Caco-2 (cell line): ENCODE measurements at regions of chr4 and their contacts with region 1.

Region 1: GRCh38 chr4:54322818-54323417 is 93.8 kb downstream of the PDGFRA start:
- DNase-seq: peak; percentile 75 to 79
- H3K4me3 ChIP-seq: no peak overlapping the region
- H3K4me3 Mint-ChIP-seq: no peak overlapping the region
- H3K27ac Mint-ChIP-seq: no peak overlapping the region
- H3K4me1 ChIP-seq: no peaks in the 10 kb centered on the region
- H3K4me1 Mint-ChIP-seq: no peaks in the 10 kb centered on the region
- H3K27me3 ChIP-seq: no peaks in the 10 kb centered on the region
- H3K27me3 Mint-ChIP-seq: no peaks in the 10 kb centered on the region
- CTCF ChIP-seq: peak; percentile 66 to 69

Region 2: GRCh38 chr4:53497487-53498244 is 825.3 kb before region 1 on chr4:
- CTCF ChIA-PET with region 1: no interaction called
- POLR2A ChIA-PET with region 1: no interaction called
- intact Hi-C with region 1: no loop called
- DNase-seq: peak in 1 of 2 experiments; percentile 42
- H3K4me3 ChIP-seq: no peak overlapping the region
- H3K4me3 Mint-ChIP-seq: no peak overlapping the region
- H3K27ac Mint-ChIP-seq: no peak overlapping the region
- H3K4me1 ChIP-seq: peaks cover 8% of the 10 kb centered on the region
- H3K4me1 Mint-ChIP-seq: no peaks in the 10 kb centered on the region
- H3K27me3 ChIP-seq: no peaks in the 10 kb centered on the region
- H3K27me3 Mint-ChIP-seq: no peaks in the 10 kb centered on the region
- CTCF ChIP-seq: no peak

Region 3: GRCh38 chr4:54375807-54376206 is 52.9 kb after region 1 on chr4:
- CTCF ChIA-PET with region 1: interaction called, 3 read pairs
- POLR2A ChIA-PET with region 1: no interaction called
- intact Hi-C with region 1: loop called (anchors 1 kb)
- DNase-seq: no peak
- H3K4me3 ChIP-seq: no peak overlapping the region
- H3K4me3 Mint-ChIP-seq: no peak overlapping the region
- H3K27ac Mint-ChIP-seq: no peak overlapping the region
- H3K4me1 ChIP-seq: no peaks in the 10 kb centered on the region
- H3K4me1 Mint-ChIP-seq: no peaks in the 10 kb centered on the region
- H3K27me3 ChIP-seq: no peaks in the 10 kb centered on the region
- H3K27me3 Mint-ChIP-seq: peaks cover 2% of the 10 kb centered on the region
- CTCF ChIP-seq: no peak

Region 4: GRCh38 chr4:54433686-54434085 is 110.8 kb after region 1 on chr4:
- CTCF ChIA-PET with region 1: interaction called, 3 read pairs
- POLR2A ChIA-PET with region 1: no interaction called
- intact Hi-C with region 1: loop called (anchors 2 kb)
- DNase-seq: peak in 1 of 2 experiments; percentile 1
- H3K4me3 ChIP-seq: no peak overlapping the region
- H3K4me3 Mint-ChIP-seq: no peak overlapping the region
- H3K27ac Mint-ChIP-seq: no peak overlapping the region
- H3K4me1 ChIP-seq: no peaks in the 10 kb centered on the region
- H3K4me1 Mint-ChIP-seq: no peaks in the 10 kb centered on the region
- H3K27me3 ChIP-seq: no peaks in the 10 kb centered on the region
- H3K27me3 Mint-ChIP-seq: peaks cover 19% of the 10 kb centered on the region
- CTCF ChIP-seq: peak; percentile 19 to 32

Region 5: DNA sequence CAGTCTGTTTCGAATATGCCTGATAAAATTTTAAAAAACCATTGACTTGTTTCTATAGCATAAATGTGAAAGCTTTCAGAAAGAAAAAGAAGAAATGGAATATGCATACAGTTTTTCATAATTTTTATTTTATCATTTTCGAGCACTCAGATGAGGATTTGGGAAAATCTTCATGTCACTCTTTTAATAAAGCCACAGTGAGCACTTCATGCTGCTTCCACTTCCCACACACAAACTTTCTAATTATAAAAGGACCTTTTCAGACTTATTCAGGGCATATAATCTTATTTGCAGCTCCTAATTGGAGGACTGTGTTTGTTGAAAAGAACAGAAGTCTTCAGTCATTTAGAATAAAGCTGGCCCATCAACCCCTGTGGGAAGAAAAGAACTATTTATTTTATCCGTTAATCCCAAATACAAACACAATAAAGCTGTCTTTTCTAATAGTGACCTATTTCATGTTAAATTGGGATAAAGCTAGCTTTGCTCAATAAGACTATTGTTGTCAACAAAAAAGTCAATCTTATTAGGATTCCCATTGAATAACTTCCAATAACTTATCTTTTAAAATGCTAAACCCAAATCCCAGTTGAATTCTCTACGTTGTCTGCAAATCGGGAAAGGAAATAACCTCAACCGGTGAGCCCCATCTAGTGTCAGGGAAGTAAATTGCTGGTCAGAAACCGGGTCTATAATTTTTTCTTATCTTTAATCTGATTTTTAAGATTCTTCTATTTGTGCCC is 117.6 kb after region 1 on chr4:
- CTCF ChIA-PET with region 1: interaction called, 5 read pairs
- POLR2A ChIA-PET with region 1: no interaction called
- intact Hi-C with region 1: loop called (anchors 1 kb)
- DNase-seq: peak in 1 of 2 experiments; percentile 39
- H3K4me3 ChIP-seq: no peak overlapping the region
- H3K4me3 Mint-ChIP-seq: no peak overlapping the region
- H3K27ac Mint-ChIP-seq: no peak overlapping the region
- H3K4me1 ChIP-seq: no peaks in the 10 kb centered on the region
- H3K4me1 Mint-ChIP-seq: no peaks in the 10 kb centered on the region
- H3K27me3 ChIP-seq: no peaks in the 10 kb centered on the region
- H3K27me3 Mint-ChIP-seq: peaks cover 22% of the 10 kb centered on the region
- CTCF ChIP-seq: peak; percentile 54 to 64

Region 6: DNA sequence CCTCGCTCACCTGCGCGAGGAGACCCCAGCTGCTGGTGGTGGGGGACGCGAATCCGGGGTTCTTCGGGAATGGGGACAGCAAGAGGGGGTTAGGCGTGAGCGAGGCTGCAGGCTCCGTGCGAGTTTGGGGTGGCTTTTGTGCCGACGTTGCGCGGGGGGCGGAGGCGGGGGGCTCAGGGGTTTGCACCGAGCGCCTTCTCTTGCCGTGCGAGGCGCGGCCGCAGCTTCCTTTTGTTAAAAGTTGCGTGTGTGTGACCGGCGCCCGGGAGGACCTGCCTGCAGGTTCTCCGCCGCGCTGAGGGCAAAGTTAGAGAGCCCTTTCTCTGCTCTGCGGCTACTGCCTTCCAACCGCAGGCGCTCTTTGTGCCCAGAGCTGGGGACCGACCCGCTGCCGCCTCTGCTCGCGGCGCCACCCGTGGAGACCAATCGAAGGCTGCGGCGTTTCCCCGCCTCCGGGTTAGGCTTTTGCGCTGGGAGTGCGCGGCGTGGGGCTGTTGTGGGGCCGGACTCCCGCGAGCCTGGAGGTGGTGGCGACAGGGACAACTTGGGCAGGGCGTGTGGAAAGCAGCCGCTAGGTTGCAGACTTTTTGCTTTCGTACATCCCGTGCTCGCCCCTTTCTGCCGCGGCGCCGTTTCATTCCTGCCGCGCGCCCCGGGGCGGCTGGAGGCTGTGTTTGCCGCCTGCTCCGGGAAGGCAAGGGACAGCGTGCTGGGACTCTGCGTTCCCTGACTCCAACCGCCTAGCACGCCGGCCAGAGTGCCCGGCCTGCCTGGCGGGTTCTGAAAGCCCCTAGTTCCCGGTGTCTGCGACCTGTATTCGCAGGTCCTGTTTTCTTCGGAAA is 335.6 kb after region 1 on chr4:
- CTCF ChIA-PET with region 1: no interaction called
- POLR2A ChIA-PET with region 1: no interaction called
- intact Hi-C with region 1: loop called (anchors 5 kb)
- DNase-seq: peak; percentile 61 to 75
- H3K4me3 ChIP-seq: peak overlapping the region; percentile 42
- H3K4me3 Mint-ChIP-seq: peak overlapping the region; percentile 76
- H3K27ac Mint-ChIP-seq: no peak overlapping the region
- H3K4me1 ChIP-seq: no peaks in the 10 kb centered on the region
- H3K4me1 Mint-ChIP-seq: no peaks in the 10 kb centered on the region
- H3K27me3 ChIP-seq: peaks cover 1% of the 10 kb centered on the region; the same call in 1 of the 2 replicates
- H3K27me3 Mint-ChIP-seq: peaks cover 4% of the 10 kb centered on the region
- CTCF ChIP-seq: peak; percentile 39 to 44

Region 7: GRCh38 chr4:54840992-54841768 is 518.3 kb after region 1 on chr4:
- CTCF ChIA-PET with region 1: no interaction called
- POLR2A ChIA-PET with region 1: no interaction called
- intact Hi-C with region 1: loop called (anchors 2 kb)
- DNase-seq: peak in 1 of 2 experiments; percentile 20
- H3K4me3 ChIP-seq: no peak overlapping the region
- H3K4me3 Mint-ChIP-seq: no peak overlapping the region
- H3K27ac Mint-ChIP-seq: no peak overlapping the region
- H3K4me1 ChIP-seq: no peaks in the 10 kb centered on the region
- H3K4me1 Mint-ChIP-seq: no peaks in the 10 kb centered on the region
- H3K27me3 ChIP-seq: no peaks in the 10 kb centered on the region
- H3K27me3 Mint-ChIP-seq: peaks cover 5% of the 10 kb centered on the region
- CTCF ChIP-seq: peak; percentile 11 to 16

Region 8: GRCh38 chr4:54961357-54961975 is 638.5 kb after region 1 on chr4:
- CTCF ChIA-PET with region 1: no interaction called
- POLR2A ChIA-PET with region 1: no interaction called
- intact Hi-C with region 1: loop called (anchors 1 kb)
- DNase-seq: peak in 1 of 2 experiments; percentile 21
- H3K4me3 ChIP-seq: no peak overlapping the region
- H3K4me3 Mint-ChIP-seq: no peak overlapping the region
- H3K27ac Mint-ChIP-seq: no peak overlapping the region
- H3K4me1 ChIP-seq: no peaks in the 10 kb centered on the region
- H3K4me1 Mint-ChIP-seq: no peaks in the 10 kb centered on the region
- H3K27me3 ChIP-seq: 0 out of 2 replicates have a peak, but pooled peaks cover 1% of the 10 kb centered on the region
- H3K27me3 Mint-ChIP-seq: peaks cover 17% of the 10 kb centered on the region
- CTCF ChIP-seq: peak; percentile 22 to 55